ENCODE measurements at regions of chr13 and their contacts with region 1.

Region 1: GRCh38 chr13:31424117-31424729 is 224.4 kb downstream of the B3GLCT start:
- DNase-seq: peak; percentile 81
- ATAC-seq: peak; percentile 95

Region 2: DNA sequence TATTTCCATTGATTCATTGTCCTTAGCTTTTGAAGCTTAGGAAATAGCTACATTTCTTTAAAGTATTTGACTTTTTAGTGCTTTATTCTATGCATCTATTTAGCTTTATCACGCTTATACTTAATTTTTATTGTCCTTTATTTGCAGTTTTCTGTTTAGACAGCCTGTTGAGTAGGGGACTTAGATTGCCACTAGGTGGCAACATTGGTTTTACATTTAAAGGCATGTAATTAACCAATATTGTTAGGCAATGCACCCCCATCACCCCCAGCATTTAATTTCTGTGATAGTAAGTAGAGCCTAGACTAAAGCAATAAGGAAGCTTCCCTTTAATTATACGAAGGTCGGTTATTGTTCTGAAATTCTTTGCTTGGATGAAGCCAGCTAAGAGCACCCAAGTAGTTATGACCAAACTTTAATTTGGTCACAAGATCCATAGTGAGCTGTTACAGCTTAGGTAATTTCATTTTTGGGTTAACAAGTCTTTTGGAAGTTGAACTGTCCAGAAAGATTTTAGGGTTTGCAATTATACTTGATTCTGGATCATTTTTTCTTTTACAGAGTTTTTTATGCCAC is 187.9 kb before region 1 on chr13:
- intact Hi-C with region 1: loop called (anchors 5 kb)
- DNase-seq: no peak
- ATAC-seq: peak; percentile 64

Region 3: DNA sequence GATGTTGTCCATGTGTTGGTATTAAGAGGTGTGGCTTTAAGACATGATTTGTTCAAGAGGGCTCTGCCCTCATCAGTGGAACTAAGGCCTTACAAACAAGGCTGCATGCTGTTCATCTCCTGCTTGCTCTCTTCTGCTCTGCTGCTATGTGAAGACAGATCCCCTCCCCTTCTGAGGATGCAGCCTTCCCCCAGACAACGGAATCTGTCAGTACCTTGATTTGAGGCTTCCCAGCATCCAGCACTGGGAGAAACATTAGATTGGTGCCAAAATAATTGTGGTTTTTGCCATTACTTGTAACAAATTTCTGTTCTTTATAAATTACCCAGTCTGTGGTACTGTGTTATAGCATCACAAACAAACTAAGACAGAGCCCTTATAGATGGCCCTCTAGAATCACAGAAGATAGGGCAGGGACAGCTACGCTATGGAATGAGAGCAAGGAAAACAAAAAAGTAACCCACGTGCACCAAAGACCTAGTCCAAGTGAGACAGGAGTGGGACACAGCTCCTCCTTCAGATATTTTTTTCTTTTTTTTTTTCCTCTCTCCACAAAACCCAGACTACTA is 163.6 kb after region 1 on chr13:
- intact Hi-C with region 1: no loop called
- DNase-seq: no peak
- ATAC-seq: no peak

Region 4: DNA sequence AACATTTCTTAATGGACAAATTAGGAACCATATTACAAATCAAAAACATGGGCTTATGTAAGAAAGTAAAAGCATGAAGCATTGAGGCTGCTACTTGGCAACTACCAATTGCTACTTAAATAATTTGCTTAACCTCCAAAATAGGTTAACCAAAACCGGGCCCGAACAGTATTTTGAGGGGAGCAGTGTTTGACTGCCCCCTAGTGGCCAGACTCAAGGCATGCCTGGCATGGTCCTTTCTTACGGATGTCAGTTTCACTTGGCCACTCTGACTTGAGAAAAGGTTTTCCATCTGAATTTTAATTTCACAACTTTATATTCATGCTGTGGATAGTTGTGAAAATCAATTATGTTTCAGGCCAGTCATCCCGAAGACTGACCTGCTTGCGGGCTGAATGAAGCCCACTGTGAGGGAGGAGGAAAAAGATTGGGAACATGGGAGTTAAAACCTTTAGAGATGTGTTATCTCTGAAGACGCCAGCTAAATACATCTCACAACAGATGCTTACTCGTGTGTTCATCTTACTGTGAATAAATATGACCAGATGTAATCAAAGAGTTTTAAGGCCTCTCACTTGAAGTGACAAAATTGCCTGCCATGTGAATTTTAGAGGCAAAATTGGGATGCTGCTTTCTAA is 318.0 kb after region 1 on chr13:
- intact Hi-C with region 1: loop called (anchors 5 kb)
- DNase-seq: peak; percentile 55
- ATAC-seq: peak; percentile 84